Left lung (tissue), 14 donors: ENCODE measurements at regions of chr19 and their contacts with region 1.

Region 1: DNA sequence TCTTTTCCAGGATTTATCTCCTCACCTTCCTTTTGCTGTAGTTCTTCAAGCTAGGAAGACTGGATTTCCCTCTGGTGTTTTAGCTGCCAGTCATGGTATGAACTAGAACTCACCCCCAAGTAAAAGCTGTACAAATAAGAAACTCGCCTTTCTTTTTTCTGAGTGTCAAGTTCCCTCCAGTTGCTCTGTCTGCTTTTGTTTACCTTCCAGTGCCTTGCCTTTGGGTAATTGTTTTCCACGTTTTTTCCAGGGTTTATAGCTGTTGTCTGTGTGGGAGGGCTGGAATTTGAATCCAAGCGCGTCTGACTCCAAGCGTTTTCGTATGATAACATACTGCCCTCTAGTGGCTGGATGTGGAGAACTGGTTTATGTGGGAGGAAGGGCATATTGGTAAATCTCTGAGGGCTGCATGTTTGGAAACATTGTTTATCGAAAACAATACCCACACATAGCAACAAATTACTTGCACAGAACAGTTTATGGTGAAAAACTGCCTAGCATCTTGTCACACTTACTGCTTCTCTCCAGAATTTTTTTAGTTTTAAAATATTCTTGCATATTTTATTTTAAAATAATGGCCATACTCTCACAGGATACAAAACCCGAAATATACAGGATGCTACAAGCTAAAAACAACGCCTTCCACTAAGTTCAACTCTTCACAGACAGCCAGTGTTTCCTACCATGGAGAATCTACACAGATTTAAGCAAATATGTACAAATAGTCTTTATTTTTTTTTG is 19.2 kb downstream of the RCN3 start:
- DNase-seq: peak in 2 of 4 donors; percentile 90 to 94
- ATAC-seq: peak; percentile 97
- H3K4me3 ChIP-seq: no peak overlapping the region
- H3K27ac ChIP-seq: no peak overlapping the region
- H3K4me1 ChIP-seq: peaks cover 0 to 8% of the 10 kb centered on the region in 2 donors
- H3K27me3 ChIP-seq: no peaks in the 10 kb centered on the region
- CTCF ChIP-seq: peak; percentile 76 to 90

Region 2: GRCh38 chr19:49506575-49507105 is 40.4 kb before region 1 on chr19:
- intact Hi-C with region 1: loop called in 1 of 2 experiments (anchors 5 kb)
- DNase-seq: no peak
- ATAC-seq: peak; percentile 89
- H3K4me3 ChIP-seq: no peak overlapping the region
- H3K27ac ChIP-seq: no peak overlapping the region
- H3K4me1 ChIP-seq: peaks cover 0 to 13% of the 10 kb centered on the region in 2 donors
- H3K27me3 ChIP-seq: no peaks in the 10 kb centered on the region
- CTCF ChIP-seq: peak; percentile 54 to 66

Region 3: GRCh38 chr19:49954079-49954829 is 407.3 kb after region 1 on chr19:
- intact Hi-C with region 1: no loop called
- DNase-seq: peak in 2 of 4 donors; percentile 13 to 64
- ATAC-seq: peak; percentile 71
- H3K4me3 ChIP-seq: no peak overlapping the region
- H3K27ac ChIP-seq: peak overlapping the region in 1 of 2 donors; percentile 57
- H3K4me1 ChIP-seq: peaks cover 4 to 50% of the 10 kb centered on the region in 2 donors
- H3K27me3 ChIP-seq: peaks cover 0 to 31% of the 10 kb centered on the region in 2 donors
- CTCF ChIP-seq: no peak